ENCODE measurements at regions of chr5 and their contacts with region 1.

Region 1: GRCh38 chr5:136802383-136802782 is 437.0 kb upstream of the TRPC7 start:
- DNase-seq: peak; percentile 14
- H3K4me3 ChIP-seq: no peak overlapping the region
- H3K27ac ChIP-seq: no peak overlapping the region
- H3K4me1 ChIP-seq: peaks cover 7% of the 10 kb centered on the region
- H3K27me3 ChIP-seq: no peaks in the 10 kb centered on the region
- CTCF ChIP-seq: peak; percentile 10 to 54

Region 2: DNA sequence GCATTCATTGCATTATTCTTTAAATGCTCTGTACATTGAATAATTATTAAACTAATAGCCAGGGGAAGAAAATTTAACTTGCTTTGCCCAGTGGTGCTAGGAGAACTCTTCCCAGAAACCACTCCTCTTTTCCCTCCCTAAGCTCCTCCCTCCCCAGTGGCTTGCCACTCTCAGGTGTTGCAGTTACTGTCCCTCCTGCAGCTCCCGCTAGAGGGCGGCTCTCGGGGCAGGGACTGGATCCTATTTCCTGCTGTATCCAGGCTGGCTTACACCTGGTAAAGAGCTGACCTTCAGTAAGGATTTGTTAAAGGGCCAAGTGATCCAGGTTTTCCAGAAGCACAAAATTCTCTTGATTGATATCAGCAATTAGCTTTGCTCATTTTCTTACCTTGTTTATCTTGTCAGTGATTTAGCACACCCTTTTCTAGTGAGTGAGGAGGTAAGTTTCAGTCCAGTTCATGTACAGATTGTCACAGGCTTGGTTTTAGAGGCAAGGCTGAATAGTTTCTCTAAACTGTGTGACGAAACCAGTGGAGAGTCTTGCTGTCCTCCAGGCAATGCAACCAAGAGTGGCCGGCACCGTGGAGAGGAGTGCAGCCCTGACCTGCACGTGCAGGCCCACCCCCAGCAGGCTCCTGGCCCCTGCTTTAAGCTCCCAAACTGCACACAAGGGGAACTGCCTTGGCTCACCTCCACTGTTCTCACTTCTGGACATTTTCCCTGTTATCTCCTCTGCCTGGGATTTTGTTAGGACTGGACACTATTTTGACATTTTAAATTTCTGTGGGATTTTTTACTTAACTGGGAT is 273.0 kb after region 1 on chr5:
- CTCF ChIA-PET with region 1: no interaction called
- dilution Hi-C with region 1: no loop called
- in situ Hi-C with region 1: no loop called
- intact Hi-C with region 1: loop called (anchors 10 kb)
- DNase-seq: peak; percentile 78
- H3K4me3 ChIP-seq: no peak overlapping the region
- H3K27ac ChIP-seq: peak overlapping the region; percentile 22
- H3K4me1 ChIP-seq: peaks cover 21% of the 10 kb centered on the region
- H3K27me3 ChIP-seq: no peaks in the 10 kb centered on the region
- CTCF ChIP-seq: peak; percentile 94

Region 3: GRCh38 chr5:137164961-137165360 is 362.6 kb after region 1 on chr5:
- CTCF ChIA-PET with region 1: no interaction called
- dilution Hi-C with region 1: no loop called
- in situ Hi-C with region 1: no loop called
- intact Hi-C with region 1: no loop called
- DNase-seq: no peak
- H3K4me3 ChIP-seq: no peak overlapping the region
- H3K27ac ChIP-seq: no peak overlapping the region
- H3K4me1 ChIP-seq: no peaks in the 10 kb centered on the region
- H3K27me3 ChIP-seq: no peaks in the 10 kb centered on the region
- CTCF ChIP-seq: no peak

Region 4: DNA sequence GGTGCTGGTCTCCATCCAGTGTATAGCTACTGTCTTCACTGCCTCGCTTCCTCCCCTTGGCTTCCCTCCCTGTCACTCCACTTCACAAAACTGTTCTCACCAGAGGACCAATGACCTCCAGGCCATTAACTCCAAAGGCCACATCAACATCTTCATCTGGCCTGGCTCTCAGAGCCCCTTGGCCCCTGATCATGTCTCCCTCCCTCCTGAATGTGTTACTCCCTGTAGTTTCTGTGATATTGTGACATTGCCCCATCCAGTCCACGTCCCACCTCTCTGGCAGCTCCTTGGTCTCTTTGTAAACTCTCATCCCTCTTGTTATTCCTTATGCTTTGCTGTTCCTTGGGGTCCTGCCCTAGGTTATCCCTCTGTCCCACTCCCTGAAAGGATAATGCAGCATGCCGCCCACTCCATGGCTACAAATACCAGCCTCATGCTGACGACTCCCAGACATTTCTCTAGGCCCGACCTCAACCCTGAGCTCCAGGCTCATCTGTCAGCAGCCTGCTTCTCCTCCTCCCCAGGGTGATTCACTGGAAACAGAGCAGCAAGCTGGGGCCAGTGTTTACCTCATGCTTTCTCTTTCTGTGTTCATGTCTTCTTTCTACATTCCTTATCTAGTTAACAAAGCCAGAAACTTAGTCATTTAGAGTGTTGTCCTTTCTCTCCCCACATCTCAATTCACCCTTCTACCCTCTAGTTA is 384.5 kb after region 1 on chr5:
- CTCF ChIA-PET with region 1: no interaction called
- dilution Hi-C with region 1: no loop called
- in situ Hi-C with region 1: no loop called
- intact Hi-C with region 1: no loop called
- DNase-seq: peak; percentile 55
- H3K4me3 ChIP-seq: no peak overlapping the region
- H3K27ac ChIP-seq: no peak overlapping the region
- H3K4me1 ChIP-seq: peaks cover 6% of the 10 kb centered on the region
- H3K27me3 ChIP-seq: no peaks in the 10 kb centered on the region
- CTCF ChIP-seq: no peak

Region 5: DNA sequence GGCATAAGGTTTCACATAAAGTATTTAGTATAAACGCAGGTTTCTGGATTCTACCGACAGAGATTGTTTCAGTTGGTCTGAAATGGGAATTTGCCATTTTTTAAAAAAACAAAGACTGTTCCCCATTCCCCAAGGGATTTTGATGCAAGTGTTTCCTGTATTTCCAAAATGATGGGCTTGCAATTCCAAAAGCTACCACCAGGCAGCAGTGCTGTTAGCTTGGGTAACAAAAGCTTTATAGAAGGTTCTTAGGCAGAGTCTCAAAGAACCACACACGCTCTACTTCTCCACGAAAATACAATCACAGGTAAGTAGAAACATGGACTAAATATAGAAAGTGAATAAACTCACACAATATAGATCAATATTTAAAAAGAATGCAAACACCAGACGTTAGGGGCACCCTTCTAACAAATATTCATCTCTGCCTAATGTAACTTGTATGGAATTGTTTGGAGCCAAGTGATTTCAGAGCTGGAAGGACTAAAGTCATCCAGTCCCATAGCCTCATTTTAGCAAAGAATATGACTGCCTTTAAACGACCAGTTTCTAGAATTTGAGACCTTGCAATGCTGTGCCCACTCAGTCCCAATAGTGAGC is 542.4 kb after region 1 on chr5:
- CTCF ChIA-PET with region 1: no interaction called
- dilution Hi-C with region 1: no loop called
- in situ Hi-C with region 1: no loop called
- intact Hi-C with region 1: loop called (anchors 5 kb)
- DNase-seq: peak; percentile 39
- H3K4me3 ChIP-seq: no peak overlapping the region
- H3K27ac ChIP-seq: no peak overlapping the region
- H3K4me1 ChIP-seq: peaks cover 14% of the 10 kb centered on the region
- H3K27me3 ChIP-seq: no peaks in the 10 kb centered on the region
- CTCF ChIP-seq: peak; percentile 98 to 100

Region 6: DNA sequence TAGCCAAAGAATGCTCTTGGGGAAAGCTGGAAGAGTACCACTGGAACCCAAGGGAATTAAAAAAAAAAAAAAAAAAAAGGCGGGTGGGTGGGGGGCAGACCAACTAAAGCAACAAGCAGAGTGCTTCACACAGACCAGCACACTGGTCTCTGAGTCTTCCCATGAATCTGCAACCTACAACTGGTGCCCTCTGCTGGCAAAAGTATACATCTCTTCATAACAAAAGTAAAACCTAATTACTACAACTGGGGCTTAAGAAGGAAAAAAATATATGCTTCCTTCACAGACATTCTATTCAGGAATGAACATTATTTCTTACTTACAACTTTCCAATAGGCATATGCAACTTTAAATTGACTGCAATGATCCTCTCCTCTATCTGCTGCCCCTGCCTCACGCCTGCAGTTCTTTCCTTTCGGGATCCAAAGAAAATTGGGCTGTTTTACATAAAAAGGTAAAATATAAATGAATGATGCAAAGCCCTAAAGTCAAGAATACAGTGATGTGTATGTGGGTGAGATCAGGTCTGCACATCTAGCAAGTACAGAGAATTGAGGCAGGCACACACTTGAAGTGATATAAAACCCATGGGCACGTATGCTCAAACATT is 940.8 kb after region 1 on chr5:
- CTCF ChIA-PET with region 1: interaction called, 10 read pairs
- dilution Hi-C with region 1: no loop called
- in situ Hi-C with region 1: no loop called
- intact Hi-C with region 1: loop called (anchors 5 kb)
- DNase-seq: peak; percentile 51
- H3K4me3 ChIP-seq: no peak overlapping the region
- H3K27ac ChIP-seq: no peak overlapping the region
- H3K4me1 ChIP-seq: no peaks in the 10 kb centered on the region
- H3K27me3 ChIP-seq: no peaks in the 10 kb centered on the region
- CTCF ChIP-seq: peak; percentile 57 to 67